Esophagus muscularis mucosa (tissue), 4 donors: ENCODE measurements at regions of chr2 and their contacts with region 1.

Region 1: GRCh38 chr2:171347591-171348032 is 86.2 kb downstream of the METTL8 start:
- DNase-seq: no peak
- H3K4me3 ChIP-seq: no peak overlapping the region
- H3K27ac ChIP-seq: peak overlapping the region; percentile 62 to 75 (median 66)
- H3K4me1 ChIP-seq: peaks cover 16 to 28% (median 24%) of the 10 kb centered on the region in 4 donors
- H3K27me3 ChIP-seq: no peaks in the 10 kb centered on the region
- CTCF ChIP-seq: no peak
- EP300 ChIP-seq: no peak
- POLR2A ChIP-seq: no peak

Region 2: DNA sequence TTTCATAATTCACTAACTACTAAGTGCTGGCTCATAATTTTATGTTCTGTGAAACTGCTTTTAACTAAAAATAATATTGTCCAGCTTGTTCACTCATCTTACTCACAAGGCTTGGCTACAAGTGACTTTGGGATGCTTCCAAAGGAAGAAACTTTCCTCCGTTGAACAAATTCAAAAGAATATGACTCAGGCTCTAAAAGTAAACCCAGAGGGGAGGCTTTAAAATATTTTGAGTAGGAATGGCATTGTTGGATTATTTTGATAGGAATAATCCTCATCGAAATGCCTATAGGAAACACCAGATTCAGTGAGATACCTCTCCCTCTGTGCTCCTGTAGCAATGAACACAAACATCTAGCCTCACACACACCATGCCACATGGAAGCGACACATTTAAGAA is 161.7 kb before region 1 on chr2:
- intact Hi-C with region 1: loop called (anchors 10 kb)
- DNase-seq: no peak
- H3K4me3 ChIP-seq: no peak overlapping the region
- H3K27ac ChIP-seq: peak overlapping the region in 3 of 4 donors; percentile 18 to 44 (median 40)
- H3K4me1 ChIP-seq: peaks cover 0 to 17% (median 10%) of the 10 kb centered on the region in 4 donors
- H3K27me3 ChIP-seq: no peaks in the 10 kb centered on the region
- CTCF ChIP-seq: no peak
- EP300 ChIP-seq: no peak
- POLR2A ChIP-seq: no peak